CD8-positive, alpha-beta T cell (primary cell): ENCODE measurements at regions of chr1 and their contacts with region 1.

Region 1: DNA sequence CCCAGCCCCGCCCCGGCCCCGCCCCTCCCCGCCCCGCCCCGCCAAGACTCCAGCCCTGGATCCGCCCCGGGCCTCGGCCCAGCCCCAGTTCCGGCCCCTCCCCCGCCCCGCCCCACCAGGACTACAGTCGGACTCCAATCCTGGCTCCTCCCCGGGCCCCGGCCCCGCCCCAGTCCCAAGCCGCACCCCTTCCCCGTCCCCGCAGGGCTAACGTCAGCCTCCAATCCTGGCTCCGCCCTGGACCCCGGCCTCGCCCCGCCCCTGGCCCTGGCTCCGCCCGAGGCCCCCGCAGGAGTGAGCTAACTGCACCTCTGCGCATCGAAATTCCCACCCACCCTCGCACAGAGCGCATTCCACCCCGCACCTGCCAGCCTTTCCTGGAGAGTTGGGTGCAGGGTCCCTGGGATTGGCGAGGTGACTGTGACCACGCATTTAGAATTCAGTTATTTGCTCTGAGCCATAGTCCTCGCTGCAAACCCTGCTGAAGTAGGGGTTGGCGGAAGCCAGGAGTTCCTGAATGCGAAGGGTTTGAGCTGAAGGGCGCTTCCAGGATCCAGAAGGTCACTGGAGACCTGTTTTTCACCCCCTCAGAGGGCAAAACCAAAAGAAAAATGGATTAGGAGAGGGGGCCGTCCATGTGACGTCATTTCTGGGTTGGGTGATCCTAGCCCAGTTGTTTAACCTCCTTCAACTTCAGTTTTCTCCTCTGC is 588 bp upstream of the IGSF8 start:
- DNase-seq: peak; percentile 96 to 99 (median 98)
- ATAC-seq: peak; percentile 86
- H3K4me3 ChIP-seq: peak overlapping the region; percentile 61 to 82
- H3K4me3 Mint-ChIP-seq: peak overlapping the region; percentile 80
- H3K27ac ChIP-seq: peak overlapping the region; percentile 93 to 99
- H3K27ac Mint-ChIP-seq: peak overlapping the region; percentile 94
- H3K4me1 ChIP-seq: peaks cover 77% of the 10 kb centered on the region
- H3K4me1 Mint-ChIP-seq: peaks cover 77% of the 10 kb centered on the region
- H3K27me3 ChIP-seq: no peaks in the 10 kb centered on the region
- H3K27me3 Mint-ChIP-seq: no peaks in the 10 kb centered on the region
- CTCF ChIP-seq: no peak

Region 2: DNA sequence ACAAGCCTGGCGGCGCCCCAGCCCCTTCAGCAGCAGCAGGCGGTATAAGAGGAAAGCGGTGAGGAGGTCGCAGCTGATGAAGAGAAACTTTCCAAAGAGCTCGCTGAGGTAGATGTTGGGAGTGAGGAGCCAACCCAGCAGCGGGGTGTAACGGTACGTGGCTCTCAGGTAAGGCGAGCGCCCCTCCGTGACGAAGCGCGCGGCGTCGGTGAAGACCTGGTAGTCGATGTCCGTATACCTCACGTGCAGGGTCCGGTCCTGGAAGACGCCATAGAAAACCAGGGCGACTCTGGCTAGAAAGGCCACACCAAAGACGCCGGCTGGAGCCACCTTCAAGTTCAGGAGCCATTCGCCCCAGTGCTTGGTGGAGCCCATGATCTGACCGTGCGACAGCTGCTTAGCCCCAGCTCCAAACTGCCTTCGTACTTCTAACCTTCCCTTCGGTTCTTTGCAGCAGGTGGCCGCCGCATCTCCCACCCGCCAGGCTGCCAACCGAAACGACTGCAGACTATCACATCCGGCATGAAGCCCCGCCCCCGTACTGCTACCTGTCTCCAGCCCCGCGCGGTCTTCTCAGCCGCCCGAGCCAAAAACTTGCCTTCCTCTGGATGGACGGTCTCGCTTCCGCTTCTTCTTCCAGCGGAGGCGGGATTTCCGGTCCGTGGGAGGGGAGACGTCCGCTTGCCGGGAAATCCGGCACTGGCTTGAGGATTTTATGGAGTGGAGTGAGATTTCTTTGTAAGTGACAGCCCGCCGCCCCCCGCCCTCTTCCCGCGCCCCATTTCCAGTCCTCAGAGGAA is 67.4 kb before region 1 on chr1 and contains the start of gene PIGM:
- CTCF ChIA-PET with region 1: interaction called, 3 read pairs
- POLR2A ChIA-PET with region 1: no interaction called
- intact Hi-C with region 1: loop called (anchors 1 to 2 kb)
- DNase-seq: peak; percentile 78 to 96 (median 94)
- ATAC-seq: peak; percentile 98
- H3K4me3 ChIP-seq: peak within 1 kb of the TSS; percentile 68 to 90
- H3K4me3 Mint-ChIP-seq: peak within 1 kb of the TSS; percentile 98
- H3K27ac ChIP-seq: peak within 1 kb of the TSS; percentile 58
- H3K27ac Mint-ChIP-seq: peak within 1 kb of the TSS; percentile 93
- H3K4me1 ChIP-seq: peaks cover 23% of the 10 kb centered on the region
- H3K4me1 Mint-ChIP-seq: peaks cover 40% of the 10 kb centered on the region
- H3K27me3 ChIP-seq: no peaks in the 10 kb centered on the region
- H3K27me3 Mint-ChIP-seq: no peaks in the 10 kb centered on the region
- CTCF ChIP-seq: no peak
- total RNA-seq, gene PIGM: 1.4 to 1.6 TPM

Region 3: GRCh38 chr1:160085686-160086455 is 13.1 kb before region 1 on chr1:
- CTCF ChIA-PET with region 1: interaction called, 80 read pairs
- POLR2A ChIA-PET with region 1: interaction called, 29 read pairs
- intact Hi-C with region 1: loop called in 1 of 2 experiments (anchors 1 kb)
- DNase-seq: peak; percentile 58 to 86 (median 81)
- ATAC-seq: peak; percentile 74
- H3K4me3 ChIP-seq: no peak overlapping the region
- H3K4me3 Mint-ChIP-seq: peak overlapping the region; percentile 32
- H3K27ac ChIP-seq: no peak overlapping the region
- H3K27ac Mint-ChIP-seq: peak overlapping the region; percentile 46
- H3K4me1 ChIP-seq: peaks cover 10% of the 10 kb centered on the region
- H3K4me1 Mint-ChIP-seq: peaks cover 20% of the 10 kb centered on the region
- H3K27me3 ChIP-seq: peaks cover 5 to 13% of the 10 kb centered on the region in 2 experiments
- H3K27me3 Mint-ChIP-seq: peaks cover 15% of the 10 kb centered on the region
- CTCF ChIP-seq: peak; percentile 81

Region 4: GRCh38 chr1:160177231-160177630 is 78.2 kb after region 1 on chr1:
- CTCF ChIA-PET with region 1: no interaction called
- POLR2A ChIA-PET with region 1: no interaction called
- intact Hi-C with region 1: no loop called
- DNase-seq: no peak
- ATAC-seq: no peak
- H3K4me3 ChIP-seq: no peak overlapping the region
- H3K4me3 Mint-ChIP-seq: no peak overlapping the region
- H3K27ac ChIP-seq: no peak overlapping the region
- H3K27ac Mint-ChIP-seq: no peak overlapping the region
- H3K4me1 ChIP-seq: no peaks in the 10 kb centered on the region
- H3K4me1 Mint-ChIP-seq: no peaks in the 10 kb centered on the region
- H3K27me3 ChIP-seq: no peaks in the 10 kb centered on the region
- H3K27me3 Mint-ChIP-seq: peaks cover 20% of the 10 kb centered on the region
- CTCF ChIP-seq: no peak

Region 5: GRCh38 chr1:160251687-160252526 is 152.9 kb after region 1 on chr1:
- CTCF ChIA-PET with region 1: interaction called, 39 read pairs
- POLR2A ChIA-PET with region 1: interaction called, 4 read pairs
- intact Hi-C with region 1: loop called (anchors 1 kb)
- DNase-seq: peak; percentile 17 to 76 (median 57)
- ATAC-seq: peak; percentile 99
- H3K4me3 ChIP-seq: no peak overlapping the region
- H3K4me3 Mint-ChIP-seq: no peak overlapping the region
- H3K27ac ChIP-seq: no peak overlapping the region
- H3K27ac Mint-ChIP-seq: peak overlapping the region; percentile 80
- H3K4me1 ChIP-seq: no peaks in the 10 kb centered on the region
- H3K4me1 Mint-ChIP-seq: peaks cover 23% of the 10 kb centered on the region
- H3K27me3 ChIP-seq: no peaks in the 10 kb centered on the region
- H3K27me3 Mint-ChIP-seq: no peaks in the 10 kb centered on the region
- CTCF ChIP-seq: peak; percentile 64

Region 6: DNA sequence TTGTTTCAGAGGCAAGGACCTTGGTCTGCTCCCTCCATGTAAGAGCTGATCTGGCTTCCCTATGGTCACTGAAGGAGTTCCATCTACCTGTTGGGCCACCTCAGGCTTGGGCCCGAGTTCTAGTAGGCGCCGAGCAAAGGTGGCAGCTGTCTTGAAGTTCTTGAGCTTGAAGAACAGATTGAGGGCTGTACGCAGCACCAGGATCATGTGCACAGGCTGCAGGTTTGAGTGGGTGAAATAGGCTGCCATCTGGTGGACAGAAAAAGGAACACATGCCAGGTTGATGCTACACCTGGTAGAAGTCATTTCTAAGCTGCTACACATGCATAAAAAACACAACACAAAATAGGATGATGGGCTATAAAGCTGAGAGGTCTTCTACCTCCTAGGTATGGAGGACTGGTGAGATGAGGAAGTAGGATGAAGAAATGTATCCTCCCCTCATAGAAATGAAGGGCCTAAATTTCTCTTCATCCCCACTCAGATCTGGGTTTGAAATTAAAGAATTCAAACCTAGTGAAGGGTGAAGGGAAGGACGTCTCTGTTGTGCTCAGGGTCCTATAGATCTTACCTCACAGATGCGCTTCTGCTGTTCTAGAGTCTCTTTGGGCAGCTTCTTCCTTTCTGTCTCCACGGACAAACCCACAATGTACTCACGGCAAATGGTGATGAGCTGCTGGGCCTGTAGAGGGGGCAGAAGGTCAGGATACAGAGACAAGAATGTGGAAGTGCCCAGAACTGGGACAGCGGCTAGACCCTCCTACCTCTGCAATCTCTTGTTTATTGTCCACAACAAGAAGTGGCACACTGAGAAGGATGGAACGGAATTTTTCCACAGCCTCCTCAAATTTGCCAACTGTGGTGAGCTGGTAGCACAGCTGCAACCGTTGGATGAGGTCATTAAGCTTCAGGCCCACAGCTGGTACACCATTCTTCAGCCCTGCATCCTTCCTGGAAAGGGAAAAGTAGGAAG is 192.5 kb after region 1 on chr1:
- CTCF ChIA-PET with region 1: interaction called, 102 read pairs
- POLR2A ChIA-PET with region 1: interaction called, 20 read pairs
- intact Hi-C with region 1: loop called in 1 of 2 experiments (anchors 1 kb)
- DNase-seq: peak; percentile 27 to 87 (median 66)
- ATAC-seq: peak; percentile 99
- H3K4me3 ChIP-seq: no peak overlapping the region
- H3K4me3 Mint-ChIP-seq: no peak overlapping the region
- H3K27ac ChIP-seq: no peak overlapping the region
- H3K27ac Mint-ChIP-seq: peak overlapping the region; percentile 23
- H3K4me1 ChIP-seq: peaks cover 4% of the 10 kb centered on the region
- H3K4me1 Mint-ChIP-seq: peaks cover 3% of the 10 kb centered on the region
- H3K27me3 ChIP-seq: no peaks in the 10 kb centered on the region
- H3K27me3 Mint-ChIP-seq: no peaks in the 10 kb centered on the region
- CTCF ChIP-seq: peak; percentile 78